ENCODE measurements at regions of chr18 and their contacts with region 1.

Region 1: GRCh38 chr18:3245853-3246634 is 1.6 kb upstream of the MYL12A start:
- DNase-seq: peak; percentile 70 to 81 (median 73)
- H3K4me3 ChIP-seq: peak overlapping the region; percentile 76 to 86
- H3K4me3 Mint-ChIP-seq: peak overlapping the region; percentile 93 to 98 (median 96)
- H3K27ac ChIP-seq: peak overlapping the region; percentile 85
- H3K27ac Mint-ChIP-seq: peak overlapping the region; percentile 80 to 99 (median 96)
- H3K4me1 ChIP-seq: peaks cover 32% of the 10 kb centered on the region
- H3K4me1 Mint-ChIP-seq: peaks cover 19 to 52% (median 30%) of the 10 kb centered on the region in 4 donors
- H3K27me3 ChIP-seq: no peaks in the 10 kb centered on the region
- H3K27me3 Mint-ChIP-seq: no peaks in the 10 kb centered on the region

Region 2: DNA sequence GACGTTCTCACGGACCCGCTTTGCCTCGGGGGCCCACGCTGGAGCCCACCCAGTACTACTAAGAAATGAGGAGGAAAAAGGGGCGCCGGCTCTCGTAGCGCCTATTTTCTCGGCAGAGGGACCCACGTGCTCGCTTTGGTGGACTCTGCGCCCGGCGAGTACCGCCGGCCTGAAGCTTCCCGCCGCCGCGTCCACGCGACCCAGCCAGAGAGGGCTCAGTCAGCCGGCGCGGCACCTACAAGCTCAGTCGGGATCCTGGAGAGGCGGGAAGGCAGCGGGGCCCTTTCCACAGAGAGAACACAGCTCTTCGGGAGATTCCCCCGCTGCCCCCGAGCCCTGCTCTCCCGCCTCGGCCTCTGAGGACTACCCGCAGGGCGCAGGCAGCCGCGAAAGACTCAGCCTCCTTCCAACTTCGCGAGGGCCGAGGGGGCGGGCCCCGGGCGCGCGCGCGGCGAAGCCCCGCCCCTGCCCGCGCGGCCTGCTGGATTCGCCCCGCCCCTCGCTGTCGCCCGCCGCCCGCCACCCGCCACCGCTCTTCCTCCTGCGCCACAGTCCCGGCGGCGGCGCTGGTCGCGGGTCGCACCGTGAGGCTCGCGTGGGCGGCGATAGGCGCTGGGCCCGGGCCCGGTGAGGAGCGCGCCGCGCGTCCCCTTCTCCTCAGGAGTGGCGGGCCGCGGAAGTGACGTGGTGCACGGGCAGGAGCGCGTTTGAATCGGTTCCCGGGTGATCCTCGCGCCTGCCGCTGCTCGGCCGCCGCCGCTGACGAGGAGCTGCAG is 590.7 kb before region 1 on chr18 and contains the start of gene SMCHD1:
- CTCF ChIA-PET with region 1: no interaction called
- POLR2A ChIA-PET with region 1: interaction called, 15 read pairs
- intact Hi-C with region 1: no loop called
- DNase-seq: peak; percentile 88 to 92 (median 90)
- H3K4me3 ChIP-seq: peak within 1 kb of the TSS; percentile 66 to 98
- H3K4me3 Mint-ChIP-seq: peak within 1 kb of the TSS; percentile 89 to 99 (median 98)
- H3K27ac ChIP-seq: peak within 1 kb of the TSS; percentile 99
- H3K27ac Mint-ChIP-seq: peak within 1 kb of the TSS; percentile 93 to 99 (median 98)
- H3K4me1 ChIP-seq: peaks cover 23% of the 10 kb centered on the region
- H3K4me1 Mint-ChIP-seq: peaks cover 17 to 38% (median 27%) of the 10 kb centered on the region in 4 donors
- H3K27me3 ChIP-seq: no peaks in the 10 kb centered on the region
- H3K27me3 Mint-ChIP-seq: no peaks in the 10 kb centered on the region
- total RNA-seq, gene SMCHD1: 268 to 288 TPM

Region 3: DNA sequence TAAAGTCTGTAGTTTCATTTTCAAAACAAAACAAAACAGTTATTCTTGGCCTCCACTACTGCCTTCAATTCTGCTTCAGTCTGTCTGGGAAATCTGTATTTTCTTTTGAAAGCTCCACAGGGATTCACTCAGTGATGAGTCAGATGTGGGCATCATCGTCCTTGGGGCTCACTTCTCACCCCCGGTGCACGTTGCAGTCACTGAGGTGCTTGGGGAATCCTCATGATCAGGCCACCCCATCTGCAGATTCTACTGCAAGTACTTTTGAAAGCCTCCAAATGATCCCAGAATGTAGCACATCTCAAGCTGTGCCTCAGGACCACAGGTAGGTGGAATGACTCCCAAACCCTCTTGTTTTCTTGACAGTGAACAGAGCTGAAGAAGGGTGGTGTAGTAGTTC is 267.4 kb before region 1 on chr18:
- CTCF ChIA-PET with region 1: interaction called, 5 read pairs
- POLR2A ChIA-PET with region 1: interaction called, 20 read pairs
- intact Hi-C with region 1: no loop called
- DNase-seq: peak in 1 of 5 donors; percentile 74
- H3K4me3 ChIP-seq: peak overlapping the region; percentile 8 to 31
- H3K4me3 Mint-ChIP-seq: peak overlapping the region; percentile 75 to 96 (median 90)
- H3K27ac ChIP-seq: peak overlapping the region; percentile 72
- H3K27ac Mint-ChIP-seq: peak overlapping the region; percentile 89 to 96 (median 93)
- H3K4me1 ChIP-seq: peaks cover 90% of the 10 kb centered on the region
- H3K4me1 Mint-ChIP-seq: peaks cover 55 to 93% (median 68%) of the 10 kb centered on the region in 4 donors
- H3K27me3 ChIP-seq: no peaks in the 10 kb centered on the region
- H3K27me3 Mint-ChIP-seq: no peaks in the 10 kb centered on the region

Region 4: GRCh38 chr18:3012964-3013804 is 232.9 kb before region 1 on chr18 and contains the start of gene LPIN2:
- CTCF ChIA-PET with region 1: no interaction called
- POLR2A ChIA-PET with region 1: interaction called, 5 read pairs
- intact Hi-C with region 1: loop called (anchors 1 kb)
- DNase-seq: peak; percentile 97 to 98 (median 98)
- H3K4me3 ChIP-seq: peak within 1 kb of the TSS; percentile 55 to 70
- H3K4me3 Mint-ChIP-seq: peak within 1 kb of the TSS; percentile 93 to 99 (median 96)
- H3K27ac ChIP-seq: peak within 1 kb of the TSS; percentile 63
- H3K27ac Mint-ChIP-seq: peak within 1 kb of the TSS; percentile 94 to 98 (median 98)
- H3K4me1 ChIP-seq: peaks cover 68% of the 10 kb centered on the region
- H3K4me1 Mint-ChIP-seq: peaks cover 51 to 75% (median 68%) of the 10 kb centered on the region in 4 donors
- H3K27me3 ChIP-seq: no peaks in the 10 kb centered on the region
- H3K27me3 Mint-ChIP-seq: no peaks in the 10 kb centered on the region
- total RNA-seq, gene LPIN2: 95.4 to 103 TPM

Region 5: GRCh38 chr18:3261371-3262246 is 15.6 kb after region 1 on chr18 and contains the start of gene MYL12B:
- CTCF ChIA-PET with region 1: interaction called, 41 read pairs
- POLR2A ChIA-PET with region 1: interaction called, 418 read pairs
- intact Hi-C with region 1: loop called (anchors 1 kb)
- DNase-seq: peak; percentile 83 to 91 (median 86)
- H3K4me3 ChIP-seq: peak within 1 kb of the TSS; percentile 89 to 94
- H3K4me3 Mint-ChIP-seq: peak within 1 kb of the TSS; percentile 94 to 100 (median 98)
- H3K27ac ChIP-seq: peak within 1 kb of the TSS; percentile 90
- H3K27ac Mint-ChIP-seq: peak within 1 kb of the TSS; percentile 98 to 100 (median 99)
- H3K4me1 ChIP-seq: peaks cover 81% of the 10 kb centered on the region
- H3K4me1 Mint-ChIP-seq: peaks cover 57 to 92% (median 70%) of the 10 kb centered on the region in 4 donors
- H3K27me3 ChIP-seq: no peaks in the 10 kb centered on the region
- H3K27me3 Mint-ChIP-seq: no peaks in the 10 kb centered on the region
- total RNA-seq, gene MYL12B: 199 to 219 TPM

Region 6: DNA sequence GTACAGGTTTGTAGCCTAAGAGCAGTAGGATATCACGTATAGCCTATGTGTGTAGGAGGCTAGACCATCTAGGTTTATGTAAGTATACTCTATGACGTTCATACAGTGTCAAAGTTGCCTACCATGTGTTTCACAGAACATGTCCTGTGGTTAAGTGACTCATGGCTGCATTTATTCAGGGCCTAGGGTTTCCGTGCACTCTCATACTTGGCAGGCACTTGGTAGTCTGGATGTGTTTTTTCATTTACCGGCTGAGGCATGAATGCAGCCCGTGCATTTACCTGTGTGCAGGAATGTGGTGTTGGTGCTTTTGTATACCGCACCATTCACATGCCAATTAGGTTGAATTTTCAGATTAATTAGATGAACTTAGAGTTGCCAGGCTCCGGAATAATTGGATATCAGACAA is 59.3 kb after region 1 on chr18:
- CTCF ChIA-PET with region 1: no interaction called
- POLR2A ChIA-PET with region 1: no interaction called
- intact Hi-C with region 1: no loop called
- DNase-seq: peak; percentile 57 to 84 (median 71)
- H3K4me3 ChIP-seq: no peak overlapping the region
- H3K4me3 Mint-ChIP-seq: peak overlapping the region in 4 of 8 donors; percentile 1 to 43 (median 22)
- H3K27ac ChIP-seq: no peak overlapping the region
- H3K27ac Mint-ChIP-seq: peak overlapping the region; percentile 68 to 94 (median 92)
- H3K4me1 ChIP-seq: peaks cover 11% of the 10 kb centered on the region
- H3K4me1 Mint-ChIP-seq: peaks cover 6 to 18% (median 13%) of the 10 kb centered on the region in 4 donors
- H3K27me3 ChIP-seq: no peaks in the 10 kb centered on the region
- H3K27me3 Mint-ChIP-seq: peaks cover 6 to 7% of the 10 kb centered on the region in 2 donors

Region 7: GRCh38 chr18:3454365-3455089 is 208.5 kb after region 1 on chr18:
- CTCF ChIA-PET with region 1: interaction called, 7 read pairs
- POLR2A ChIA-PET with region 1: interaction called, 34 read pairs
- intact Hi-C with region 1: loop called (anchors 1 kb)
- DNase-seq: peak; percentile 53 to 61 (median 57)
- H3K4me3 ChIP-seq: peak overlapping the region; percentile 40 to 52
- H3K4me3 Mint-ChIP-seq: peak overlapping the region; percentile 80 to 97 (median 95)
- H3K27ac ChIP-seq: peak overlapping the region; percentile 94
- H3K27ac Mint-ChIP-seq: peak overlapping the region; percentile 87 to 100 (median 98)
- H3K4me1 ChIP-seq: peaks cover 70% of the 10 kb centered on the region
- H3K4me1 Mint-ChIP-seq: peaks cover 43 to 84% (median 59%) of the 10 kb centered on the region in 4 donors
- H3K27me3 ChIP-seq: no peaks in the 10 kb centered on the region
- H3K27me3 Mint-ChIP-seq: peaks cover 0 to 2% of the 10 kb centered on the region in 2 donors